Tibial artery (tissue), 4 donors: ENCODE measurements at regions of chr5 and their contacts with region 1.

Region 1: GRCh38 chr5:32790411-32790951 is 79.4 kb downstream of the NPR3 start:
- DNase-seq: no peak
- H3K4me3 ChIP-seq: no peak overlapping the region
- H3K27ac ChIP-seq: no peak overlapping the region
- H3K4me1 ChIP-seq: peaks cover 0 to 3% (median 0%) of the 10 kb centered on the region in 4 donors
- H3K27me3 ChIP-seq: no peaks in the 10 kb centered on the region
- CTCF ChIP-seq: no peak

Region 2: GRCh38 chr5:32734827-32735378 is 55.6 kb before region 1 on chr5:
- intact Hi-C with region 1: loop called (anchors 2 kb)
- DNase-seq: no peak
- H3K4me3 ChIP-seq: no peak overlapping the region
- H3K27ac ChIP-seq: peak overlapping the region in 1 of 2 donors; percentile 26
- H3K4me1 ChIP-seq: peaks cover 0 to 30% (median 6%) of the 10 kb centered on the region in 4 donors
- H3K27me3 ChIP-seq: no peaks in the 10 kb centered on the region
- CTCF ChIP-seq: no peak